Naive thymus-derived CD4-positive, alpha-beta T cell (primary cell): ENCODE measurements at regions of chr21 and their contacts with region 1.

Region 1: GRCh38 chr21:38985568-38986378 is 180.0 kb downstream of the ETS2 start:
- DNase-seq: peak in 2 of 9 donors; percentile 13 to 72
- ATAC-seq: peak; percentile 53
- H3K4me3 ChIP-seq: no peak overlapping the region
- H3K4me3 Mint-ChIP-seq: peak overlapping the region in 4 of 10 donors; percentile 2 to 73 (median 23)
- H3K27ac ChIP-seq: no peak overlapping the region
- H3K27ac Mint-ChIP-seq: peak overlapping the region in 1 of 9 donors; percentile 95
- H3K4me1 ChIP-seq: no peaks in the 10 kb centered on the region
- H3K4me1 Mint-ChIP-seq: peaks cover 2 to 46% (median 12%) of the 10 kb centered on the region in 7 donors
- H3K27me3 ChIP-seq: peaks cover 0 to 10% of the 10 kb centered on the region in 2 donors
- H3K27me3 Mint-ChIP-seq: peaks cover 4 to 87% (median 66%) of the 10 kb centered on the region in 5 donors

Region 2: GRCh38 chr21:38937844-38938742 is 47.7 kb before region 1 on chr21:
- CTCF ChIA-PET with region 1: no interaction called
- POLR2A ChIA-PET with region 1: no interaction called
- intact Hi-C with region 1: loop called in 1 of 2 experiments (anchors 1 kb)
- DNase-seq: peak in 6 of 9 donors; percentile 3 to 42 (median 16)
- ATAC-seq: peak; percentile 65
- H3K4me3 ChIP-seq: no peak overlapping the region
- H3K4me3 Mint-ChIP-seq: peak overlapping the region in 1 of 10 donors; percentile 37
- H3K27ac ChIP-seq: no peak overlapping the region
- H3K27ac Mint-ChIP-seq: peak overlapping the region in 1 of 9 donors; percentile 87
- H3K4me1 ChIP-seq: no peaks in the 10 kb centered on the region
- H3K4me1 Mint-ChIP-seq: peaks cover 0 to 22% (median 8%) of the 10 kb centered on the region in 7 donors
- H3K27me3 ChIP-seq: no peaks in the 10 kb centered on the region
- H3K27me3 Mint-ChIP-seq: peaks cover 0 to 5% (median 0%) of the 10 kb centered on the region in 5 donors

Region 3: DNA sequence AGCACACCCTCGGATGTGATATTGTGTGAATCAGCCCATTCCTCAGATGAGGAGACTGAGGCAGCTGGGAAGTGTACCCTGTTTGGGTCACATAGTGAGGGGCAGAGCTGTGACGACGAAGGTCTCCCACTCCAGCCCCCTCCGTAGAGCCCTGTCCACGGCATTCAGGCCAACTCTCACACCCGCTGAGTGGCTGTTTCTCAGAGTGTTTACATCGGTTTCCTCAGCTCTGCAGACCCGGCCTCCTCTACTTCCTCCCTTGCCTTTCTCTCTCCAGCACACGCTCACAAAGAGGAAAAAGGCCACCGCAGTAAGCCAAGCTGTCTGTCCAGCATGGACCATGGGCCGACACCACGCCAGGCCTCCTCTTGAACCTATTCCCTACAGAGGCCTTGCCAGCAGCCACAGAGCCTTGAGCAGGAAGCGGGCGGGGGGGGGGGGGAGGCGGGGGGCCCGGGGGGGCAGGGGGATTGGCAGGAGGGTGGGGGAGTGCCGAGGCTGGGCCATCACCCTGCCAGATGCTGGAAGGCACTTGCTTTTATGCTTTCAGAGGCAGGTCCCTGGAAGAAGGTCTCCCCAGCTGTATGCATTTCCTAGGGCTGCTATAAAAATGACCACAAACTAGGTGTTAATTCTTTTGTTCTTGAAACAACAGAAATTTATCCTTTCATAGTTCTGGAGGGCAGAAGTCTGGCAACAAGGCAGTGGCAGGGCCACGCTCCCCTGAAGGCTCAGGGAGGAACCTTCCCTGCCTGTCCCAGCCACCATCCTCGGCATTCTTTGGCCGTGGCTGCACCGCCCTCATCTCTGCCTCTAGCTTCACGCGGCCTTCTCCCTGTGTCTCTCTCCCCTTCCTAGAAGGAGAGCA is 19.1 kb after region 1 on chr21:
- CTCF ChIA-PET with region 1: no interaction called
- POLR2A ChIA-PET with region 1: no interaction called
- intact Hi-C with region 1: loop called in 1 of 2 experiments (anchors 2 kb)
- DNase-seq: peak in 4 of 9 donors; percentile 5 to 23 (median 18)
- ATAC-seq: peak; percentile 53
- H3K4me3 ChIP-seq: no peak overlapping the region
- H3K4me3 Mint-ChIP-seq: peak overlapping the region in 8 of 10 donors; percentile 52 to 81 (median 64)
- H3K27ac ChIP-seq: no peak overlapping the region
- H3K27ac Mint-ChIP-seq: peak overlapping the region in 5 of 9 donors; percentile 48 to 96 (median 85)
- H3K4me1 ChIP-seq: no peaks in the 10 kb centered on the region
- H3K4me1 Mint-ChIP-seq: peaks cover 7 to 49% (median 22%) of the 10 kb centered on the region in 7 donors
- H3K27me3 ChIP-seq: no peaks in the 10 kb centered on the region
- H3K27me3 Mint-ChIP-seq: peaks cover 0 to 5% (median 4%) of the 10 kb centered on the region in 5 donors